T-cell (primary cell): ENCODE measurements at regions of chr4 and their contacts with region 1.

Region 1: DNA sequence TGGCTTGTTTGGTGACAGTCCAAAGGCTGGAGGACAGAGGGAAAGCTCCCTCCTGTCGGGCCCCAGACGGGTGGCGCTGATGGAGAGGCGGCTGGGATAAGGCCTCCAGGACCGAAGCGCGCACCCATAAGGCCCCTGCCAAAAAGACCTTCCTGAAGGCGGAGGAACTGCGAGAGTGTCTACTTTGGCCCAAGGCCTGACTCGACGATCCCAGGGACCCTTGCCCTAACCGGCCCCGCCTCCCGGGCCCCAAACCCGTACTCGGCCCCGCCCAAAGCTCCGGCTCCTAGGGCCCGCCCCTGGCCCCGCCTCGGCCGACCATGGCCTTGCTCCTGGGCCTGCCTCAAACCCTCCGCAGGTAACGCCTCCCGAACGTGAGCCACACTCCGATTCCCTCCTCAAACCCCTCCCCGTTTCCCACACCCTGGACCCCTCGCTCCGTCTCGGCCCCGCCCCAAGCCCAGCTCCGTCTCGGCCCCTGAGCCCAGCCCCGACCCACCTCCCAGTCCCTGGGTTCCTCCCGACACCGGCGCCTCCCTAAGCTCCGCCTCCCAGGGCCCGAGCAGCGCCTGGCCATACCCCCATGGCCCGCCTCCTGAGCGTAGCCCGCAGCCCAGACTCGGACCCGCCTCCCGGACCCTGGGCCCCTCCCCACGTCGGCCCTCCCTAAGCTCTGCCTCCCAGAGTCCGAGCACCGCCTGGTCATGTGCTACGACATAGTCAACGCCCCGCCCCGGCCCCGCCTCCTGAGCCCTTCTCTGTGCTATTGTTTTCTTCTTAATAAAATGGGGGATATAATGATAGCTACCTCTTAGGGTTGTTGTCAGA is 90.0 kb upstream of the DRD5 start:
- DNase-seq: peak; percentile 74 to 92 (median 87)
- ATAC-seq: peak; percentile 98 to 99 (median 99)
- H3K4me3 ChIP-seq: peak overlapping the region; percentile 52 to 79
- H3K4me3 Mint-ChIP-seq: peak overlapping the region; percentile 83 to 85 (median 83)
- H3K27ac ChIP-seq: peak overlapping the region; percentile 82
- H3K27ac Mint-ChIP-seq: peak overlapping the region; percentile 84 to 93
- H3K4me1 ChIP-seq: peaks cover 2 to 20% of the 10 kb centered on the region in 2 experiments
- H3K4me1 Mint-ChIP-seq: peaks cover 23 to 26% (median 24%) of the 10 kb centered on the region in 3 donors
- H3K27me3 ChIP-seq: peaks cover 0 to 2% of the 10 kb centered on the region in 2 experiments
- H3K27me3 Mint-ChIP-seq: no peaks in the 10 kb centered on the region

Region 2: GRCh38 chr4:9624458-9624857 is 67.0 kb before region 1 on chr4:
- CTCF ChIA-PET with region 1: no interaction called
- POLR2A ChIA-PET with region 1: no interaction called
- DNase-seq: no peak
- ATAC-seq: no peak
- H3K4me3 ChIP-seq: no peak overlapping the region
- H3K4me3 Mint-ChIP-seq: no peak overlapping the region
- H3K27ac ChIP-seq: no peak overlapping the region
- H3K27ac Mint-ChIP-seq: no peak overlapping the region
- H3K4me1 ChIP-seq: no peaks in the 10 kb centered on the region
- H3K4me1 Mint-ChIP-seq: no peaks in the 10 kb centered on the region
- H3K27me3 ChIP-seq: peaks cover 0 to 3% of the 10 kb centered on the region in 2 experiments
- H3K27me3 Mint-ChIP-seq: peaks cover 0 to 3% of the 10 kb centered on the region in 2 donors

Region 3: DNA sequence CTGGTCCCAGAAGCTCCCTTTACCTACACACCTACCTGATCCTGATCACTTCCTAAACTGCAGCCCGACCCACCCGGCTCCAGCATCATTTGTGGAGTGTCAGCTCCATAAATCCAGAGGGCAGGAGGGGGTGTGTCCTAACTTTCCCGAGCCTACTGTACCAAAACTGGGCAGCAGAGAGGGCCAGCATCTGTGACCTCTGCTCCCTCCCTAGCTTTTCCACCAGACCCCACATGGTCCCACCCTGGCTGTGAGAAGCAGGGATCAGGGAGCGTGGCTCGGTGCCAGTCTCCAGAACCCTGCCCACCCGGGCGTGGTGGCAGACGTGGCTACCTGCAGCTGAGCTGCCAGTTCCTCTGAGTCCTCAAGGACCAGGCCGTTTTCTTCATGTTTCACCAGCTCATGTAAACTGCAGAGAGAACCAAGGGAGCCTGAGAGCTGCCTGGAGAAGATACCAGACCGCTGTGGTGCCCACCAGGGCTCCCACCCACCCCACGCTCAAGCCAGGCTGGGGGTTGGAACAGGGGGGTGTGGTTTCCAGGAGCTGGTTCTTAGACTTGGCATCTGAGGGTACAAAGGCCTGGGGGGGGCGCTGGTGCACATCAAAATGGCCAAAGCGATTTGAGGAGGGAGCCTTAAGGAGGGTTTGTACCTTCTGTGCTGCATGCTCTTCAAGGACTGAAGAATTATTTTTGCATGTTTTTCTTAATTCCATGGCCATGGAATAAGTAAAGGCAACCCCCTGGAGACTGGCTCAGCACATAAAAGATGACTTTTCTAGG is 13.3 kb after region 1 on chr4:
- CTCF ChIA-PET with region 1: interaction called, 4 to 12 read pairs
- POLR2A ChIA-PET with region 1: no interaction called
- DNase-seq: no peak
- ATAC-seq: no peak
- H3K4me3 ChIP-seq: no peak overlapping the region
- H3K4me3 Mint-ChIP-seq: no peak overlapping the region
- H3K27ac ChIP-seq: no peak overlapping the region
- H3K27ac Mint-ChIP-seq: no peak overlapping the region
- H3K4me1 ChIP-seq: peaks cover 0 to 10% of the 10 kb centered on the region in 2 experiments
- H3K4me1 Mint-ChIP-seq: peaks cover 13 to 15% (median 13%) of the 10 kb centered on the region in 3 donors
- H3K27me3 ChIP-seq: peaks cover 0 to 3% of the 10 kb centered on the region in 2 experiments
- H3K27me3 Mint-ChIP-seq: no peaks in the 10 kb centered on the region

Region 4: DNA sequence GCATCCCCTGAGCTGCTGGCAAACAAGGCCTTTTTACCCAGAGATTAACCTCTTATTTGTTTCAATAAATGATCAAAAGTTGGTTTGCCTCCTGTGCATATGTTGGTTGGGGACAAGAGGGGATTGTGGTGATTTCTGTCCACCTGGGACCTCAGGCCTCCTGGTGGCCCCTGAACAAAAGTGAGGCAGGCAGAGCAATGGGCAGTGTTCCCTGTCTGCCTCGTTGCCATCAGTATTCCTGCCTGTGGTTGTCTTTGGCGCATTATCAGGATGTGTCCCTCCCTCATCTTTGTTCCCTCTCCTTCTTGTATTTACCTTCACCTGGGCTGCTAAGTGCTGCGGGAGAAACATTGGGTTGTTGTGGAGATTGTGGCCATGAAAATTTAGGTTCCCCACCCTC is 24.6 kb after region 1 on chr4:
- CTCF ChIA-PET with region 1: no interaction called
- POLR2A ChIA-PET with region 1: no interaction called
- DNase-seq: no peak
- ATAC-seq: no peak
- H3K4me3 ChIP-seq: no peak overlapping the region
- H3K4me3 Mint-ChIP-seq: no peak overlapping the region
- H3K27ac ChIP-seq: no peak overlapping the region
- H3K27ac Mint-ChIP-seq: no peak overlapping the region
- H3K4me1 ChIP-seq: no peaks in the 10 kb centered on the region
- H3K4me1 Mint-ChIP-seq: no peaks in the 10 kb centered on the region
- H3K27me3 ChIP-seq: peaks cover 0 to 4% of the 10 kb centered on the region in 2 experiments
- H3K27me3 Mint-ChIP-seq: peaks cover 0 to 7% of the 10 kb centered on the region in 2 donors

Region 5: GRCh38 chr4:9762823-9763475 is 71.5 kb after region 1 on chr4:
- CTCF ChIA-PET with region 1: no interaction called
- POLR2A ChIA-PET with region 1: no interaction called
- DNase-seq: peak in 14 of 35 experiments; percentile 3 to 54 (median 11)
- ATAC-seq: no peak
- H3K4me3 ChIP-seq: no peak overlapping the region
- H3K4me3 Mint-ChIP-seq: no peak overlapping the region
- H3K27ac ChIP-seq: no peak overlapping the region
- H3K27ac Mint-ChIP-seq: no peak overlapping the region
- H3K4me1 ChIP-seq: no peaks in the 10 kb centered on the region
- H3K4me1 Mint-ChIP-seq: no peaks in the 10 kb centered on the region
- H3K27me3 ChIP-seq: peaks cover 0 to 25% of the 10 kb centered on the region in 2 experiments
- H3K27me3 Mint-ChIP-seq: peaks cover 25 to 41% of the 10 kb centered on the region in 2 donors

Region 6: GRCh38 chr4:9800848-9801247 is 109.4 kb after region 1 on chr4:
- CTCF ChIA-PET with region 1: no interaction called
- POLR2A ChIA-PET with region 1: no interaction called
- DNase-seq: no peak
- ATAC-seq: no peak
- H3K4me3 ChIP-seq: no peak overlapping the region
- H3K4me3 Mint-ChIP-seq: no peak overlapping the region
- H3K27ac ChIP-seq: no peak overlapping the region
- H3K27ac Mint-ChIP-seq: no peak overlapping the region
- H3K4me1 ChIP-seq: no peaks in the 10 kb centered on the region
- H3K4me1 Mint-ChIP-seq: no peaks in the 10 kb centered on the region
- H3K27me3 ChIP-seq: peaks cover 0 to 18% of the 10 kb centered on the region in 2 experiments
- H3K27me3 Mint-ChIP-seq: peaks cover 18 to 42% of the 10 kb centered on the region in 2 donors